ENCODE measurements at regions of chr19 and their contacts with region 1.

Region 1: GRCh38 chr19:38335949-38336637 is 463 bp downstream of the CATSPERG start:
- DNase-seq: peak; percentile 98
- ATAC-seq: peak; percentile 80
- H3K4me3 Mint-ChIP-seq: peak overlapping the region; percentile 86
- H3K27ac Mint-ChIP-seq: peak overlapping the region; percentile 99
- H3K4me1 Mint-ChIP-seq: peaks cover 12% of the 10 kb centered on the region
- H3K27me3 Mint-ChIP-seq: no peaks in the 10 kb centered on the region

Region 2: DNA sequence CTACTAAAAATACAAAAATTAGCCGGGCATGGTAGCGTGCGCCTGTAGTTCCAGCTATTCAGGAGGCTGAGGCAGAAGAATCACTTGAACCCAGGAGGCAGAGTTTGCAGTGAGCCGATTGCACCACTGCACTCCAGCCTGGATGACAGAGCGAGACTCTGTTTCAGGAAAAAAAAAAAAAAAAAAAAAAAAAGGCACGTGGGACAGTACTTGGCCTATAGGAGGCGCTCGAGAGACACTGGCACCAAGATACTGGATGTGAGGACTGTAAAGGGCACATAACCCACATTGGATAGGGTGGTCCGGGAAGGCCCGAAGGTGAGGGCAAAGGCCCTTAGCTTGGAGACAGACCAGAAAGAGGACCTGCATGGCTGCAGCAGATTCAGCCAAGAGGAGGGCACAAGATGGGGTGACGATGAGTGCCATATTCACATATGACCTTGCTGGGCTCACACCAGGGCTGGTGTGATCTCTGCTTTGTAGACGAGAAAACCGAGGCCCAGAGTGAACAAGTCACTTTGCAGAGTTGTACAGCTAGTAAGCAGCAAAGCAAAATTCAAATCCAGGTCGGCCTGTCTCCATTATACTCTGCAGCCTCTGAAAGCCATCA is 201.4 kb before region 1 on chr19:
- CTCF ChIA-PET with region 1: no interaction called
- DNase-seq: peak; percentile 47
- ATAC-seq: no peak
- H3K4me3 Mint-ChIP-seq: no peak overlapping the region
- H3K27ac Mint-ChIP-seq: no peak overlapping the region
- H3K4me1 Mint-ChIP-seq: no peaks in the 10 kb centered on the region
- H3K27me3 Mint-ChIP-seq: no peaks in the 10 kb centered on the region

Region 3: DNA sequence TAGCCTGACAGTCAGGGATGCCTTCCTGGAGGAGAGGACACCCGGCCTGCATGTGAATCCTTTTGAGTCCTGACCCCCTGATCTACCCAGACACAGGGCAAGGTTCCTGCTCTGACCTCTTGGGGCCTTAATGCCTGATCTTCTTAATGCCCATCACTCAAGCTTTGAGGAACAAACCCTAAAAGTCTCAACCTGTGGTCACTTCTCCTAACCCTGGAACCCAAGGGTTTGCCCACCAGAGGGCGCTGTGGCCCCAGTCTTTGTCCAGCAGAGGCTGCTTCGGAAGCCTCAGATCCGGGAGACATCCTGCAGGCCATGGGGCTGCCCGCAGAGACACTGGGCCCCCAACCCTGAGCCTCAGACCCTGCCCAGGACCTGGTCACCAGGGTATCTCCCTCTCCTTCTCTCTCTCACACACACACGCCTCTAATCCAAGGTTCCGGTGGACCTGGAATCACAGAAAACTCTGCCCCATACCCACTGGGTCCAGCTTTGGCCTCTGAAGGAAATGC is 102.3 kb before region 1 on chr19:
- CTCF ChIA-PET with region 1: interaction called, 12 read pairs
- DNase-seq: peak; percentile 86
- ATAC-seq: peak; percentile 59
- H3K4me3 Mint-ChIP-seq: no peak overlapping the region
- H3K27ac Mint-ChIP-seq: no peak overlapping the region
- H3K4me1 Mint-ChIP-seq: peaks cover 5% of the 10 kb centered on the region
- H3K27me3 Mint-ChIP-seq: peaks cover 29% of the 10 kb centered on the region

Region 4: GRCh38 chr19:38245826-38246498 is 90.1 kb before region 1 on chr19:
- CTCF ChIA-PET with region 1: interaction called, 70 read pairs
- DNase-seq: no peak
- ATAC-seq: no peak
- H3K4me3 Mint-ChIP-seq: no peak overlapping the region
- H3K27ac Mint-ChIP-seq: no peak overlapping the region
- H3K4me1 Mint-ChIP-seq: peaks cover 4% of the 10 kb centered on the region
- H3K27me3 Mint-ChIP-seq: no peaks in the 10 kb centered on the region

Region 5: DNA sequence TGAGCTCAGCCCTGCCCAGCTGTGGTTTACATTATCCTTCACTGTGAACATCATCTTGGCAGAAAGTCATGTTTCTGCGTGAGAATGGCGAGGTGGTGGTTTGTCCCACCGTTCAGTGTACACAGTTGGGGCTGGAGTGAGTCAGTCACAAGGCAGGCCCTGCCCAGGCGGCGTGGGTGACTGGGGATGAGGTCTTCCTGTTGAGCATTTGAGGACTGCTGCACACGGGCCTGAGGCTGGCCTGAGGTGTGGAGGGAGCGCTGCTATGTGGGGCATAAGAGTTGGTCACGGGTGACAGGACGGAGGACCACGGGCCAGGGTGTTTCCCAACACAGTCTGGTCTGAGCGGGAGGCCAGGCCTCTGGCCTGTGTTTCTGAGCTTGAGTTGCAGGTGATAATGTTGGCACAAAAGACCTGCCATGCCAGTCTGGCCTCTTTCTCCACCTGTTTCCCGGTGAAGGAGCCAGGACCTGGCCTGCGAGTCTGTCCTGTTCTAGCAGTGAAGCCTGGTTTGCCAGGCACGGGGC is 45.4 kb before region 1 on chr19:
- CTCF ChIA-PET with region 1: no interaction called
- DNase-seq: no peak
- ATAC-seq: no peak
- H3K4me3 Mint-ChIP-seq: no peak overlapping the region
- H3K27ac Mint-ChIP-seq: no peak overlapping the region
- H3K4me1 Mint-ChIP-seq: no peaks in the 10 kb centered on the region
- H3K27me3 Mint-ChIP-seq: no peaks in the 10 kb centered on the region

Region 6: DNA sequence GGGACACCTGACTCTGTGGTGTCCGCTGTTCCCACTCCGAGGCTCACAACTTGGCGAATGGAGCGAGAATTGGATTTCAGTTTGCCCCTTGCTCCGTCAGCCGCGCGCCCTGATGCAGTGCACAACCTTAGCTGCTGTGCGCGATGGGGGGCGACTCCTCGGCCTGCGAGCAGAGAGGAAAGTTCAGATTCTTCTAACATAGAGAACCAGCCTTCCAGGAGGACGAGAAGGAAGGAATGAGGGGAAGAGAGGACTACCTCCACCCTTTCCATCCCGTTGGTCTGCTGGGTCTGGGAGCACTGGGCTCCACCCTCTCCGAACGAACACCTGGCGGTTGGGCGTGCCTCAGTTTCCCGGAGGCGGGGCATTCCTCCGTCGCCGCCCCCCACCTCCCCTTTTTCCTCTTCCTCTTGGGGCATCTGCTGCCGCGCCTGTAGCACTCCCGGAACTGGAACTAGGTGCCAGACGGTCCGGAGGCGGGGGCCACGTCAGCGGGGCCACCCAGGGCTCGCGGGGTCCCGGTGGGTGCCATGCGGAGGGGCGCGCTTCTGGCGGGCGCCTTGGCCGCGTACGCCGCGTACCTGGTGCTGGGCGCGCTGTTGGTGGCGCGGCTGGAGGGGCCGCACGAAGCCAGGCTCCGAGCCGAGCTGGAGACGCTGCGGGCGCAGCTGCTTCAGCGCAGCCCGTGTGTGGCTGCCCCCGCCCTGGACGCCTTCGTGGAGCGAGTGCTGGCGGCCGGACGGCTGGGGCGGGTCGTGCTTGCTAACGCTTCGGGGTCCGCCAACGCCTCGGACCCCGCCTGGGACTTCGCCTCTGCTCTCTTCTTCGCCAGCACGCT is 16.5 kb before region 1 on chr19 and contains the start of gene KCNK6:
- CTCF ChIA-PET with region 1: interaction called, 41 read pairs
- DNase-seq: peak; percentile 60
- ATAC-seq: peak; percentile 9
- H3K4me3 Mint-ChIP-seq: peak within 1 kb of the TSS; percentile 79
- H3K27ac Mint-ChIP-seq: peak within 1 kb of the TSS; percentile 70
- H3K4me1 Mint-ChIP-seq: peaks cover 52% of the 10 kb centered on the region
- H3K27me3 Mint-ChIP-seq: no peaks in the 10 kb centered on the region
- total RNA-seq, gene KCNK6: 10.8 to 13.5 TPM

Region 7: DNA sequence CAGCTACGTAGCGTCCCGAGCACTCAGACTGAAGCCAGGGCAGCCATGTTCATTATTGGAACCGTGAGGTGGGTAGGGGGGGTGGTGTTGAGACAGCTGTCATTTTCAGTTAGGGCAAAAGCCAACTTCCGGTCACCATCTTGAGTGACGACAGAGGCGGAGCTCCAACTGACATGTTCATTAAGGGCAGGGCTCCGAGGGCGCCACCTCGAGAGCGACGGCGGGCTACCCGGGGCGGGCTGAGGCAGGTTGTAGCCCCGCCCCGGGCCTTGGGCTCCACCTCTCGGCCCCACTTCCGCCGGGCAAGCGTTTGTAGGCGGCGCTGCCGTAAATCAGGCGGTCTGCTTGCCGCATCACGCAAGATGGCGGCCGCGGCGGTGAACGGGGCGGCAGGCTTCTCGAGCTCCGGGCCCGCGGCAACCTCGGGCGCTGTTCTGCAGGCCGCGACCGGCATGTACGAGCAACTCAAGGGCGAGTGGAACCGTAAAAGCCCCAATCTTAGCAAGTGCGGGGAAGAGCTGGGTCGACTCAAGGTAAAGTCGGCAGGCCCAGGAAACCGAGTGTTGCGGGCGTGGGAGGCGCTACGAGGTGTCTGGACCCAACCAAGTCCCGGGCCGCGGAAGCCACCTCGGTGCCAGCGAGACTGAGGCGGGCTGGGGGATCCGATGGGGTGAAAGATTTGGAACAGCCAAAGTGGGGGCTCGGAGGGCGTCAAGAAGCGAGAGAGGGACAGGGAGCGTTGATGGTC is 38.5 kb after region 1 on chr19 and contains the start of gene PSMD8:
- CTCF ChIA-PET with region 1: interaction called, 46 read pairs
- DNase-seq: peak; percentile 100
- ATAC-seq: peak; percentile 99
- H3K4me3 Mint-ChIP-seq: peak within 1 kb of the TSS; percentile 98
- H3K27ac Mint-ChIP-seq: peak within 1 kb of the TSS; percentile 98
- H3K4me1 Mint-ChIP-seq: peaks cover 22% of the 10 kb centered on the region
- H3K27me3 Mint-ChIP-seq: peaks cover 4% of the 10 kb centered on the region
- total RNA-seq, gene PSMD8: 164 to 204 TPM

Measured in activated CD8-positive, alpha-beta memory T cell treated with anti-CD3 and anti-CD28 coated beads, Interleukin-2, amount 10 ng/mL, durations not matched to agents 7 days and 5 days (primary cell).